Heart left ventricle (tissue), 16 donors: ENCODE measurements at regions of chr12 and their contacts with region 1.

Region 1: GRCh38 chr12:52278541-52279421 is 4.3 kb downstream of the KRT86 start:
- DNase-seq: peak; percentile 61 to 90 (median 70)
- ATAC-seq: peak; percentile 79 to 96 (median 92)
- H3K4me3 ChIP-seq: no peak overlapping the region
- H3K27ac ChIP-seq: peak overlapping the region in 1 of 12 donors; percentile 79
- H3K4me1 ChIP-seq: peaks cover 0 to 29% (median 11%) of the 10 kb centered on the region in 12 donors
- H3K27me3 ChIP-seq: peaks cover 0 to 31% (median 3%) of the 10 kb centered on the region in 9 donors
- CTCF ChIP-seq: peak; percentile 94 to 99 (median 98)
- POLR2A ChIP-seq: no peak

Region 2: GRCh38 chr12:52010152-52010622 is 268.6 kb before region 1 on chr12:
- intact Hi-C with region 1: no loop called
- DNase-seq: peak; percentile 89 to 91 (median 89)
- ATAC-seq: peak; percentile 73 to 85 (median 80)
- H3K4me3 ChIP-seq: peak overlapping the region in 11 of 12 donors; percentile 20 to 93 (median 86)
- H3K27ac ChIP-seq: peak overlapping the region; percentile 85 to 99 (median 94)
- H3K4me1 ChIP-seq: peaks cover 0 to 55% (median 33%) of the 10 kb centered on the region in 12 donors
- H3K27me3 ChIP-seq: peaks cover 0 to 20% (median 4%) of the 10 kb centered on the region in 9 donors
- CTCF ChIP-seq: no peak
- POLR2A ChIP-seq: peak in 1 of 2 donors; percentile 25

Region 3: GRCh38 chr12:52167954-52168717 is 110.6 kb before region 1 on chr12:
- intact Hi-C with region 1: loop called in 3 of 10 experiments (anchors 5 kb)
- DNase-seq: peak in 2 of 5 donors; percentile 34 to 61
- ATAC-seq: peak; percentile 69 to 81 (median 74)
- H3K4me3 ChIP-seq: no peak overlapping the region
- H3K27ac ChIP-seq: no peak overlapping the region
- H3K4me1 ChIP-seq: peaks cover 0 to 20% (median 6%) of the 10 kb centered on the region in 12 donors
- H3K27me3 ChIP-seq: no peaks in the 10 kb centered on the region
- CTCF ChIP-seq: no peak
- POLR2A ChIP-seq: no peak

Region 4: GRCh38 chr12:52213512-52214420 is 65.0 kb before region 1 on chr12:
- intact Hi-C with region 1: loop called in 1 of 10 experiments (anchors 5 kb)
- DNase-seq: peak; percentile 72 to 90 (median 80)
- ATAC-seq: peak; percentile 80 to 94 (median 91)
- H3K4me3 ChIP-seq: no peak overlapping the region
- H3K27ac ChIP-seq: no peak overlapping the region
- H3K4me1 ChIP-seq: peaks cover 0 to 28% (median 2%) of the 10 kb centered on the region in 12 donors
- H3K27me3 ChIP-seq: peaks cover 0 to 1% (median 0%) of the 10 kb centered on the region in 9 donors
- CTCF ChIP-seq: peak; percentile 88 to 99 (median 95)
- POLR2A ChIP-seq: peak in 1 of 2 donors; percentile 17

Region 5: GRCh38 chr12:52221912-52222457 is 56.8 kb before region 1 on chr12:
- intact Hi-C with region 1: loop called in 3 of 10 experiments (anchors 5 to 10 kb)
- DNase-seq: peak in 2 of 5 donors; percentile 47 to 75
- ATAC-seq: peak in 2 of 4 donors; percentile 29 to 63
- H3K4me3 ChIP-seq: no peak overlapping the region
- H3K27ac ChIP-seq: no peak overlapping the region
- H3K4me1 ChIP-seq: peaks cover 0 to 13% (median 0%) of the 10 kb centered on the region in 12 donors
- H3K27me3 ChIP-seq: peaks cover 0 to 27% (median 5%) of the 10 kb centered on the region in 9 donors
- CTCF ChIP-seq: peak; percentile 12 to 60 (median 44)
- POLR2A ChIP-seq: no peak

Region 6: GRCh38 chr12:52254112-52254964 is 24.4 kb before region 1 on chr12:
- intact Hi-C with region 1: loop called in 1 of 10 experiments (anchors 2 kb)
- DNase-seq: no peak
- ATAC-seq: no peak
- H3K4me3 ChIP-seq: no peak overlapping the region
- H3K27ac ChIP-seq: no peak overlapping the region
- H3K4me1 ChIP-seq: peaks cover 0 to 21% (median 3%) of the 10 kb centered on the region in 12 donors
- H3K27me3 ChIP-seq: peaks cover 12 to 69% (median 41%) of the 10 kb centered on the region in 9 donors
- CTCF ChIP-seq: no peak
- POLR2A ChIP-seq: no peak

Region 7: DNA sequence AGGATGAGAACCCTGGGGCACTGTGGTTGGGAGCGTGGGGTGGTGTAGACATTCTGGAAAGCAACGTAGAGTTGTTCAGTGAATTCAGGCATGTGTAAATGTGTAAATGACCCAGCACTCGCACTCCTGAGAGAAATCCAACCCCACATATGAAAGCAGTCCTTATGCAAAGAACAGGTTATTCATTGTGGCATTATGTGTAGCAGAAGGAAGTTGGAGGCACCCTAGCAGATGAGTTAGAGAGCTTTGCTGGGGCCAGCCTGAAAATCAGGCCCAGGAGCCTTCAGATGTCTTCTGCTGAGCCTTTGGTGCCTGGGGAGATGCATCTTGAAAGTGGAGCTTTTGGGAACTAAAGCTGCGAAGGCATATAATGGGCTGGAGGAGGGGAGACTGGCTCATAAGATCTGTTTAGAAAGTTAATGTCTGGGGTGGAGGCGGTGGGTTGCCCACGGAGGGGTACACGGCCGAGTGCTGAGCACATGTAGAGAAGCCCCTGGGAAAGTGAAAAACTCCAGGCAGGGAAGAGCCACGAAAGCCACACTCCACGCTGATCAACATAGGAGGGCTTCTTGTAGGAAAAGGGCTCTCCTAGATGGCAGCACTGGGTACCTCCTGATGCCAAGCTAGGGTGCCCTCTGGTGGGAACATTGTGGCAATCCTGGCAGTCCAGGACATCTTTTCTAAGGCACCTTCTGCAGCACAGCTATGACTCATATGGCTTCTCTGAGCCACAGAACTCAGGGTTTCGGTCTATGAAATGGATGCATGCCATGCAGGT is 48.5 kb after region 1 on chr12:
- intact Hi-C with region 1: no loop called
- DNase-seq: peak in 4 of 5 donors; percentile 57 to 75 (median 68)
- ATAC-seq: peak; percentile 57 to 93 (median 85)
- H3K4me3 ChIP-seq: no peak overlapping the region
- H3K27ac ChIP-seq: no peak overlapping the region
- H3K4me1 ChIP-seq: no peaks in the 10 kb centered on the region
- H3K27me3 ChIP-seq: peaks cover 0 to 19% (median 0%) of the 10 kb centered on the region in 9 donors
- CTCF ChIP-seq: peak; percentile 50 to 83 (median 68)
- POLR2A ChIP-seq: no peak

Region 8: DNA sequence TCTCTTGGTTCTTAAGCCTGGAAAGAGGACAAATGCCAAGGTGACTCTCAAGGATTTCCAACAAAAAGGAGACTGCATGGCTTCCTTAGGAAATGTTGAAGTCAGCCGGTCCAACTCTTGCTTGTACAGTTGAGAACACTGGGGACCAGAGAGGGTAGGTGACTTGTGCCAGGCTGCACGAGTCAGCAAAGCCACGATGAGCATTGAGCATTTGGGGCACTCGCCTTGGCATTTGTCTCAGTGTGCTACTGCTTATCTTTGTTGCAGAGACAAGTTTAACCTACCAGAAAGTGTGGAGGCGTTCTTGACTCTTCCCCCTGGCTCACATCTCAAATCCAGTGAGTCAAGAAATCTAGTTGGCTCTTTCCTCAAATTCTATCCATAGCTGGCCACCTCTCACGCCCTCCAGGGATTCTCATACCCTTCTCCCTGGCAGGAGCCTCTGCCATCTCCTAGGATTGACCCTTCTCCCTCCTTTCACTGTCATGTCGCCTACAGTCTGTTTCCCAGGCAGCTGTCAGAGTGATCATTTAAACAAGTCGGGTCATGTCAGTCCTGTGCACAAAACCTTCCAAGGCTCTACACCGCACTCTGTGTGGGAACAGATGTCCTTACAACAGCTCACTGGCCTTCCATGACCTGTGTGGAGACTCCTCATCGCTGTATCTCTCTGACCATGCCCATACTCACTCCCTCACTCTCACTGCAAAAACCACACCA is 59.6 kb after region 1 on chr12:
- intact Hi-C with region 1: no loop called
- DNase-seq: no peak
- ATAC-seq: peak in 1 of 4 donors; percentile 27
- H3K4me3 ChIP-seq: no peak overlapping the region
- H3K27ac ChIP-seq: no peak overlapping the region
- H3K4me1 ChIP-seq: no peaks in the 10 kb centered on the region
- H3K27me3 ChIP-seq: peaks cover 0 to 17% (median 0%) of the 10 kb centered on the region in 9 donors
- CTCF ChIP-seq: no peak
- POLR2A ChIP-seq: no peak